ENCODE measurements at regions of chr7 and their contacts with region 1.

Region 1: DNA sequence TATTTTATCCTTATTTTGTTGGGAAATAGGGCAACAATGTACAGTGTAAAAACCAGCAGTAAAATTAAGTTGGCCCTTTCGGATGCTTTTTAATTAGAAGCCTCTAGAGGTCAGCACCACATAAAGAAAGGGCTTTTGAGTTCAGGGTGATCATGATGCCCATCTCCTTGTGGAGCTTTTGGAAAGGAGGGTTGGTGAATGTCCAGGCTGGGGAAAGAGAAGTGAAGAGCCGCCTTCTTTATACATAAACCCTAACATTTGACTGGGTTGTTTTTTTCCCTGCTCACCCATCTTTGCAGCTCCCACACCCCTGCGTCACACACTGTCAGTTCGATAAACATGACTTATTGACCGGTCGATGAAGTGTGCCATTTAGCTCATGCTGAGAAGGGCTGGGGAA is 29.8 kb downstream of the MTURN start:
- DNase-seq: no peak
- H3K4me3 Mint-ChIP-seq: no peak overlapping the region
- H3K27ac Mint-ChIP-seq: peak overlapping the region; percentile 48
- H3K4me1 Mint-ChIP-seq: peaks cover 40% of the 10 kb centered on the region
- H3K27me3 Mint-ChIP-seq: peaks cover 2% of the 10 kb centered on the region

Region 2: GRCh38 chr7:30134611-30135545 is 29.7 kb before region 1 on chr7 and contains the start of gene MTURN:
- intact Hi-C with region 1: loop called (anchors 2 kb)
- DNase-seq: peak; percentile 81
- H3K4me3 Mint-ChIP-seq: peak within 1 kb of the TSS; percentile 86
- H3K27ac Mint-ChIP-seq: peak within 1 kb of the TSS; percentile 80
- H3K4me1 Mint-ChIP-seq: peaks cover 4% of the 10 kb centered on the region
- H3K27me3 Mint-ChIP-seq: peaks cover 34% of the 10 kb centered on the region
- total RNA-seq, gene MTURN: 4.0 and 4.7 TPM in 2 replicates

Region 3: DNA sequence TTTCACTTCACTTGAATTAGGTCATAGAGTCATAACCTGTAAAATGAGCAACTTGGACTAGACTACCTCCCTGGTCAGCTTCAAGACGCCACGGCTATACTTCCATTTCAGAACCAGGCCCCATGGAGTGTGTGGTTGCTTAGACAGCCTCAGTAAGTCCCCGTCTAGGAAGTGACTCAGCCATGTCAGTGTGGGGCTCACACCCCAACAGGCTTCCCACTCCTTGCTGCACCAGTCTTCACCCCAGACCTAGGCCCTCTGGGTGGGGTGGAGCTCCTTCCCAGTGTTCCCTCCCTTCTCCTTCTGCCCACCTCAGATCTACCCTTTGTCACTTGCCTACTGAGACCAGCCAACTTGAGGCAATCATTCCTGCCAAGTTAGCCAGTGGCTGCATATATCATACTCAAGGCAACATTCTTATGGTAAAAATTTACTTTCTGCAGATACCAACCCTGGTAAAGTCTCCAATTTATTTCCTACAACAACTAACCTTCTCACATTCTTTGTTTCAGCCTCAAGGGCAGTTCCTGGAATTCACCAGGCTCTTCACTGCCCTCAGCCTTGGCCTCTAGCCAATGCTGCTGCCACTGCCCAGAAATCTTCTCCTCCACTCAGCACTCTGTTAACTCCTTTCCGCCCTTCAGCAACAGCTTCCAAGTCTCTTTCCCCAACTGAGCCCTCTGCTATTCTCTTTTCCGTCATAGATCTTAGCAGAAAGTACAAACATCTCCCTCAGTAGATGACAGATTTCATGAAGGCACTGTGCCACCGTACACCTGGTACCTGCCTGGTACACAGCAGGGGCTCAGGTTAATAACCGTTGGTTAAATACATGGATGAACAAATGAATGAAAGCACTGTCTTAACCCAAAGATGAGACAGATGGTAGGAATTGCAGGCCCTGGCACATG is 88.6 kb after region 1 on chr7:
- intact Hi-C with region 1: no loop called
- DNase-seq: no peak
- H3K4me3 Mint-ChIP-seq: no peak overlapping the region
- H3K27ac Mint-ChIP-seq: no peak overlapping the region
- H3K4me1 Mint-ChIP-seq: peaks cover 13% of the 10 kb centered on the region
- H3K27me3 Mint-ChIP-seq: no peaks in the 10 kb centered on the region

Region 4: DNA sequence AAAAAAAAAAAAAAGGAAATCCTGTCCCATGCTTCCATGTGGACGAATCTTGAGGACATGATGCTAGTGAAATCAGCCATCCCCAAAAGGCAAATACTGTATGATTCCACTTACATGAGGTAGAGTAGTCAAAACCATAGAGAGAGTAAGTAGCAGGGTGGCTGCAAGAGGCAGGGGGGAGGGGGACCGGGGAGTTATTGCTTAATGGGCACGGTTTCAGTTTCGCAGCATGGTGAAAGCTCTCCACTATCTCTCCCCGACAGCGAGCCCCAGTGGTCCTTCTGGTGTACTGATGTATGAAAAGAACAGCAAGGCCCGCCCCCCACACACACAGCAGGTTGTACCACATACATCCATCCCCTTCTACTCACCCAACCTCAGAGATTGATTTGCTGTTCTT is 281.2 kb after region 1 on chr7:
- intact Hi-C with region 1: loop called (anchors 5 kb)
- DNase-seq: peak; percentile 75
- H3K4me3 Mint-ChIP-seq: no peak overlapping the region
- H3K27ac Mint-ChIP-seq: no peak overlapping the region
- H3K4me1 Mint-ChIP-seq: peaks cover 4% of the 10 kb centered on the region
- H3K27me3 Mint-ChIP-seq: no peaks in the 10 kb centered on the region

Measured in activated T-helper 2 cell treated with anti-CD3 and anti-CD28 coated beads, Interferon-gamma antibody, Interleukin-2, Interleukin-4, amounts not matched to agents 10 μg/mL and 5 μg/mL and 100 μg/mL, durations not matched to agents 14 hours and 24 hours and 36 hours (primary cell).